OCI-LY7 (cell line): ENCODE measurements at regions of chr13 and their contacts with region 1.

Region 1: GRCh38 chr13:65112123-65113075 is 2117.7 kb downstream of the PCDH9 start:
- DNase-seq: no peak
- H3K4me3 ChIP-seq: no peak overlapping the region
- H3K27ac ChIP-seq: no peak overlapping the region
- H3K4me1 ChIP-seq: no peaks in the 10 kb centered on the region
- CTCF ChIP-seq: no peak

Region 2: GRCh38 chr13:64871742-64872141 is 240.7 kb before region 1 on chr13:
- CTCF ChIA-PET with region 1: no interaction called
- POLR2A ChIA-PET with region 1: no interaction called
- intact Hi-C with region 1: no loop called
- DNase-seq: no peak
- H3K4me3 ChIP-seq: no peak overlapping the region
- H3K27ac ChIP-seq: no peak overlapping the region
- H3K4me1 ChIP-seq: no peaks in the 10 kb centered on the region
- CTCF ChIP-seq: no peak

Region 3: GRCh38 chr13:64997438-64997837 is 115.0 kb before region 1 on chr13:
- CTCF ChIA-PET with region 1: no interaction called
- POLR2A ChIA-PET with region 1: no interaction called
- intact Hi-C with region 1: no loop called
- DNase-seq: no peak
- H3K4me3 ChIP-seq: no peak overlapping the region
- H3K27ac ChIP-seq: no peak overlapping the region
- H3K4me1 ChIP-seq: peaks cover 4% of the 10 kb centered on the region
- CTCF ChIP-seq: no peak

Region 4: GRCh38 chr13:65133094-65133493 is 20.7 kb after region 1 on chr13:
- CTCF ChIA-PET with region 1: no interaction called
- POLR2A ChIA-PET with region 1: no interaction called
- intact Hi-C with region 1: loop called (anchors 2 kb)
- DNase-seq: no peak
- H3K4me3 ChIP-seq: no peak overlapping the region
- H3K27ac ChIP-seq: no peak overlapping the region
- H3K4me1 ChIP-seq: no peaks in the 10 kb centered on the region
- CTCF ChIP-seq: no peak

Region 5: DNA sequence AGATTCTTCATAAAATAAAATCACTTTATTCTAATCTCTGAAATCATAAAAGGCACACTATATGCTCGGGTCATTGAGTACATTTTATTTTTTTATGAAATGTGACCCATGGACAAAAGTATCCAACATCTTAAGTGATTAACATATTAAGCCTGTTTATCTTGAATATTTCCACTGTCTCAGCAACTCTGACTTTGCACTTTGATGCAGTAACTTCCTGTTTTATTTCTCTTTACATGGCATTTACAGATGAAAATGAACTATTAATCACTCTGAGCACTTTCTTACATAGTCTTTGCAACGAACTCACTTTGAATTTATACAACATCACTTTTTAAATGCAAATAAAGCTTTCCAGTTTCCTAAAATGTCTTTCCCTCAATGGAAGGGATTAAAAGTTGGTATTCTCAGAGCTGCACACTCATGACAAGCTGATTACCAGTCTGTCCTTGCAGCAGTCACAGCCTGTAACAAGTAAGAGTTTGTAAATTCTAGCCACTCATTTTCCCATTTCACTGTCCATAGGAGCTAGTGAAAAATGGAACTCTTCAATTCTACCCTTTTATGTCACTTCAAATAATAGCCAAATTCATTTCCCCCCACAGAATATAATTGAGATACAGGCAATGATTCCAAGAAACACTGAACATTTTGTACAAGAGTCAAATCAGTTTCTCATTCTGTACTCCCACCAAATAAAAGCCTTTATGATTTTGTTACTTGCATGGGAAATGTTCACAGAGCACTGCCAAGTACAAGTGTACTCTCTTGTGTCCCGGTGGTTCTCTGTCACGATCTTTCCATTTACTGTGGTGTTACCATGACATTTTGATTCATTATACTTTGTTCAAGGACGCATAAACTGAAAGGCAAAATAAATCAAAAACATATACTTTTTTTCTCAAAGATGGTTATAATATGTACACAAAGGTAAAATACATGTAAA is 148.8 kb after region 1 on chr13:
- CTCF ChIA-PET with region 1: no interaction called
- POLR2A ChIA-PET with region 1: no interaction called
- intact Hi-C with region 1: no loop called
- DNase-seq: no peak
- H3K4me3 ChIP-seq: no peak overlapping the region
- H3K27ac ChIP-seq: no peak overlapping the region
- H3K4me1 ChIP-seq: no peaks in the 10 kb centered on the region
- CTCF ChIP-seq: no peak

Region 6: DNA sequence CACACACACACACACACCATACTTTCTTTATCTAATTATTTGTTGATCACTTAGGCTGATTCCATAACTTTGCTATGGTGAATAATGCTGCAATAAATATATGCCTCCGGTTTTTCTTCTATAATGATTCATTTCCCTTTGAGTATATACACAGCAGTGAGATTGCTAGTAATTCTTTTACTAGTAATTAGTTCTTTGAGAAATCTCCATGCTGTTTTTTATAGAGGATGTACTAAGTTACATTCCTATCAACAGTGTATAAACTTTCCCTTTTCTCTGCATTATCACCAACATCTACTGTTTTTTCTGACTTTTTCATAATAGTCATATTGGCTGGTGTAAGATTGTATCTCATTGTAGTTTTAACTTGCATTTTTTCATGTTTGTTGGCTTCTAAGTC is 712.6 kb after region 1 on chr13:
- CTCF ChIA-PET with region 1: no interaction called
- POLR2A ChIA-PET with region 1: no interaction called
- intact Hi-C with region 1: no loop called
- DNase-seq: no peak
- H3K4me3 ChIP-seq: no peak overlapping the region
- H3K27ac ChIP-seq: no peak overlapping the region
- H3K4me1 ChIP-seq: no peaks in the 10 kb centered on the region
- CTCF ChIP-seq: no peak